ENCODE measurements at regions of chr9 and their contacts with region 1.

Region 1: DNA sequence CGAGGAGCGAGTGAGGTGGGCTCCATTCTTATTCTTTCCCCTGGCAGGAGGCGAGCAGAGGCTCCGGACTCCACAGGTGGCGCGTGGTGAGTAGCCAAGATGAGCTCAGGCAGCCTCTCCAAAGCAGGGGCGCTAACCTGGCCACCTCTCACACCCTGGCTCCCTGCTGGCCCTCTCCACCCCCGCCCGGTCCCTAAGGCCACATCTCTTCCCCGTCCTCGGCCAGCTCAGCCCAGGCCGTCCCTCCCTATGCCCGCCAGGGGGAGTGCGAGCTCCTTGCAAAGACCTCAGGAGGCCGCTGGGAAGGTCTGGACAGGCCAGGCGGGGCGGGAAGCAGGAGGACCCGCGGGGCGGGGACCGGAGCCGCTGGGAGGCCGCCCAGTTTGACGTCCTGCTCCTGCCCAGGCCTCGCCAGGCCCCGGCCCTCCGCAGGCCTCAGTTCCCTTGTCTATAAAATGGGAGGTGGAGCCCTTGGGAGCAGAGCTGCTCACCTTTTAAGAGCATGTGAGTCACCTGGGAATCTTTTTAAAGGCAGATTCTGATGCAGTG is 46.3 kb upstream of the GGTA1 start:
- DNase-seq: peak; percentile 99
- H3K4me3 ChIP-seq: peak overlapping the region; percentile 46
- H3K27ac ChIP-seq: no peak overlapping the region
- H3K4me1 ChIP-seq: 0 out of 2 replicates have a peak, but pooled peaks cover 4% of the 10 kb centered on the region
- H3K27me3 ChIP-seq: no peaks in the 10 kb centered on the region

Region 2: GRCh38 chr9:121686930-121687541 is 141.1 kb after region 1 on chr9:
- in situ Hi-C with region 1: loop called (anchors 5 kb)
- DNase-seq: peak; percentile 78
- H3K4me3 ChIP-seq: no peak overlapping the region
- H3K27ac ChIP-seq: no peak overlapping the region
- H3K4me1 ChIP-seq: no peaks in the 10 kb centered on the region
- H3K27me3 ChIP-seq: no peaks in the 10 kb centered on the region

Region 3: GRCh38 chr9:121989010-121989409 is 443.1 kb after region 1 on chr9:
- in situ Hi-C with region 1: loop called (anchors 5 kb)
- DNase-seq: no peak
- H3K4me3 ChIP-seq: no peak overlapping the region
- H3K27ac ChIP-seq: no peak overlapping the region
- H3K4me1 ChIP-seq: peaks cover 22% of the 10 kb centered on the region
- H3K27me3 ChIP-seq: no peaks in the 10 kb centered on the region

Region 4: GRCh38 chr9:122218935-122219855 is 673.2 kb after region 1 on chr9:
- in situ Hi-C with region 1: no loop called
- DNase-seq: peak; percentile 38
- H3K4me3 ChIP-seq: 0 out of 2 replicates have a peak overlapping the region, but pooled peaks have one; percentile 22
- H3K27ac ChIP-seq: no peak overlapping the region
- H3K4me1 ChIP-seq: peaks cover 7% of the 10 kb centered on the region; the same call in 1 of the 2 replicates
- H3K27me3 ChIP-seq: peaks cover 98% of the 10 kb centered on the region

Measured in GM23248 (cell line).